Left colon (tissue), 2 donors: ENCODE measurements at regions of chr6 and their contacts with region 1.

Region 1: DNA sequence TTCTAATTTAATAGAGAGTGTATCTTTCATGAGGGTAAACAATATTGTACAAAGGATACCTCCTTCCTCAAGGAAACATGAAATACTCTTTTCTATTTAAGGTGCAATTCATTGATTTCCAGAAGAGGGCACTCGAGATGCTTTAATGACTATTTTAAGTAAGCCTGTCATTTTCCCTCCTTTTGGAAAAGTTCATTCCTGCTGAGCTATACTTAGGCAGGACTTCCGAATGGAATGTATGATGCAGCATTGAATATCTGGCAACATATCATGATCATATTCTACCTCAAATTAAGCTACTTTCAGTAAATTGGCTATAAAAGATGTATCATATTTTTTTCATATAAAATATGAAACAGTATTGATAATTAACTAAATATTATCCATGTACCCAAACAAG is 5.0 kb downstream of the DST start:
- DNase-seq: no peak
- ATAC-seq: peak; percentile 68

Region 2: GRCh38 chr6:56699066-56699654 is 61.5 kb after region 1 on chr6:
- intact Hi-C with region 1: loop called (anchors 2 to 10 kb)
- DNase-seq: no peak
- ATAC-seq: peak; percentile 75

Region 3: DNA sequence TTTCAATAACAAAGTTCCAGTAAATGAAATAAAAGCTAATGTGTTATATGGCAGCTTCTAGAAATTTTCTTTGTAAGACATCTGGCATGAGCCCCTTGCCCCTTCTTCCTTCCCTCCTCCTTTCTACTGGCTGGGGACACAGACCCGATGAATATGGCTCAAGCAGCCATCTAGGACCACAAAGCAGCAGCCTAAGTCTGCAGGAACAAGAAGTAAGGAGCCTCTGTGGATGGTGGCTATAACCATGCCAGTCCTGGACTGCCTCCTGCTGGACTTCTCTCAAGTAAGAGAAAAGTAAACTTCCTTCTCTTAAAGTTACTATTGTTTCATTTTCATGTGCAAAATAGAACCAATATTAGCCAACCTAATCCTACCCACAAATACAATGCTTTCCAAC is 119.9 kb after region 1 on chr6:
- intact Hi-C with region 1: loop called in 1 of 2 experiments (anchors 10 kb)
- DNase-seq: peak; percentile 47 to 62
- ATAC-seq: peak; percentile 84

Region 4: GRCh38 chr6:56851541-56852259 is 214.1 kb after region 1 on chr6:
- intact Hi-C with region 1: loop called in 1 of 2 experiments (anchors 5 kb)
- DNase-seq: no peak
- ATAC-seq: peak; percentile 66